Activated CD4-positive, alpha-beta memory T cell treated with anti-CD3 and anti-CD28 coated beads, Interleukin-2, amount 10 ng/mL, durations not matched to agents 7 days and 5 days (primary cell): ENCODE measurements at regions of chr9 and their contacts with region 1.

Region 1: DNA sequence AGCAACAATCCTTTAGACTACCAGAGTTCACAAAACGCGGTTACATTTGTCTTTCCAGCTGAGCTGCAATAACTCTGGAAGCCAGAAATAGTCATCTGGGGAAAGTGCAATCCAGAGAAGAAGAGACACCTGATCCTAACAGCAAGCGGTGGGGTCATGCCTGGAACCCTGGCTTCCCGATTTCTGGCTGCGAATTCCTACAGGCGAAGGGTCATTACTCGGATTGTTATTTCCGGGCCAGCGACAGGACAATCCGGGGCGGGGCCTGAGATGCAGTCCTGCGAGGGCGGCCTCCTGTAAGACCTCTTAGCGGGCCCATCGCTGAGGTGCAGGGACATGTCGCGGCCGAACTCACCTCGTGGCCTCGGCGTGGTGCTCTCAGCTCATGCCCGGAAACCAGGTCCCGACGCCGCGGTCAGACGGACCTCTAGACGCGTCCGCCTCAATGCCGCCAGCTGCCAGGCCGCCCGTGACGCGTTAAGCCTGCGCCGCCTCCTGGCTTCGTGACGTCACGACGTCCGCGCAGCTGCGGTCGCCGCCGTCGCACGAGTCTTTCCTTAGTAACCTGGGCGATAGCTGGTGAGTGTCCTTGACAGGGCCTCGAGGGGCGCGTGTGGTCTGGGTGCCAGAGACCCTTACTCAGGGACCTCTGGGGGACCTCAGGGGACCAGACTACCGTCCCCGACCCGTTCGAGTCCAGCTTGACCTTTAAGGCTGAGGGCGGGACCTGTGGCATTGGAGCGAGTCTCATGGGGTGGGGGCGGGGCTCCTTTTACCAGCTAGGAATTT is at the starts of genes MRRF and RBM18:
- DNase-seq: peak; percentile 94
- H3K4me3 Mint-ChIP-seq: peak within 1 kb of the TSS; percentile 94
- H3K27ac Mint-ChIP-seq: peak within 1 kb of the TSS; percentile 97
- H3K4me1 Mint-ChIP-seq: peaks cover 42% of the 10 kb centered on the region
- H3K27me3 Mint-ChIP-seq: no peaks in the 10 kb centered on the region
- total RNA-seq, gene MRRF: 27.0 to 29.2 TPM
- total RNA-seq, gene RBM18: 21.6 to 25.6 TPM

Region 2: GRCh38 chr9:122092611-122093506 is 171.7 kb before region 1 on chr9 and contains the start of gene TTLL11:
- CTCF ChIA-PET with region 1: no interaction called
- POLR2A ChIA-PET with region 1: interaction called, 16 read pairs
- DNase-seq: peak; percentile 97
- H3K4me3 Mint-ChIP-seq: peak within 1 kb of the TSS; percentile 81
- H3K27ac Mint-ChIP-seq: no peak within 1 kb of the TSS
- H3K4me1 Mint-ChIP-seq: peaks cover 31% of the 10 kb centered on the region
- H3K27me3 Mint-ChIP-seq: peaks cover 18% of the 10 kb centered on the region
- total RNA-seq, gene TTLL11: 1.5 to 2.1 TPM

Region 3: GRCh38 chr9:122159026-122159924 is 105.3 kb before region 1 on chr9 and contains the starts of genes MORN5 and NDUFA8:
- CTCF ChIA-PET with region 1: no interaction called
- POLR2A ChIA-PET with region 1: interaction called, 14 read pairs
- DNase-seq: peak; percentile 96
- H3K4me3 Mint-ChIP-seq: peak within 1 kb of the TSS; percentile 97
- H3K27ac Mint-ChIP-seq: peak within 1 kb of the TSS; percentile 84
- H3K4me1 Mint-ChIP-seq: peaks cover 26% of the 10 kb centered on the region
- H3K27me3 Mint-ChIP-seq: peaks cover 22% of the 10 kb centered on the region
- total RNA-seq, gene MORN5: not detected
- total RNA-seq, gene NDUFA8: 36.1 to 37.0 TPM

Region 4: DNA sequence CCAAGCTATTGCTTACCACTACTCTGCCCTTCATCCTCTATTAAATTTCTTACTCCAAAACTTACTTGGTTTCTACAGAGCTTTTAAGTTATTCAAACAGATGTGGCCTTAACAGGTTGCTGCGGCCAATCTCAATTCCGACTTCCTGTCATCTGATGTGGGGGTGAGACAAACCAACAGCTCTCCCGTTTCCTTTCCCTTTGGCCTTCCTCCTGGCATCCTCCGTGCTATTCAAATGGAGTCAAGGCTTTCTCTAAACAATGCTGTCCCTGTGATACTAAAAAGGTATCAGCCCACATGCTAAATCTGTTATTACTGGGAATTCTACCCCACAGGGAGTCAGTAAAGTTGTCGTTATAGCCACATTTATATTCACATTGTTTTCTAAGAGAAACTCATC is 11.8 kb before region 1 on chr9:
- CTCF ChIA-PET with region 1: no interaction called
- POLR2A ChIA-PET with region 1: interaction called, 10 read pairs
- DNase-seq: no peak
- H3K4me3 Mint-ChIP-seq: no peak overlapping the region
- H3K27ac Mint-ChIP-seq: no peak overlapping the region
- H3K4me1 Mint-ChIP-seq: no peaks in the 10 kb centered on the region
- H3K27me3 Mint-ChIP-seq: no peaks in the 10 kb centered on the region